ENCODE measurements at regions of chr16 and their contacts with region 1.

Region 1: DNA sequence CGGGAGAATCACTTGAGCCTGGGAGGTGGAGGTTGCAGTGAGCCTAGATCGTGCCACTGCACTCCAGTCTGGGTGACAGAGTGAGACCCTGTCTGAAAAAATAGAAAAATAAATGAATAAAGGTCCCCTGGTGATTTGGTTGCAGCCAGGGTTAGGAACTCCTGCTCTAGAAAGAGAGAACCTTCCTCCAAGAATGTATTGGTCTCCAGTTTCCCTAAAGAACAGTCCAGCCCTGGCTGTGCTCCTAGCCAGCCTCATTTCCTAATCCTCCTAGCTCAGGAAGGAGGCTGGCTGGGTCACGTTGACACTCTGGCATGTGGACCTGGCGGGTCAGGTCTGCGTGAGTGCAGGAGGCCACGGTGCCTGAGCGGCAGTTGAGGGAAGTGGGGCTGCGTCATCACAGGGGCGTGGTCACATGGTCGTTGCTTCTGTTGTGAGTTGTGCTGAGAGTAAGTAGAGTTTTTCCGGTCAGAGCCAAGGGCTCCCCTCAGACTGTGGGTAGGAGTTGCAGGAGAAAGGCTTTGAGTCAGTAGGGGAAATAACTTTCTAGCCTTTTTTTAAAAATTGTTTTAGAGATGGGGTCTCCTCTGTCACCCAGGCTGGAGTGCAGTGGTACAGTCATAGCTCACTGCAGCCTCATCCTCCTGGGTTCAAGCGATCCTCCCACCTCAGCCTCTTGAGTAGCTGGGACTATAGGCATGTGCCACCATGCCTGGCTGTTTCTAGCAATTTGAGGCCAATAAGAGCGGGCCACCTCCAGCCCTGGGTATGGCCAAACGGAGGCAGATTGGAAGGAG is 193.9 kb upstream of the CIBAR2 start:
- DNase-seq: peak; percentile 61 to 87 (median 85)
- ATAC-seq: peak; percentile 88
- H3K4me3 ChIP-seq: no peak overlapping the region
- H3K4me3 Mint-ChIP-seq: peak overlapping the region; percentile 45 to 86 (median 61)
- H3K27ac ChIP-seq: peak overlapping the region; percentile 57
- H3K27ac Mint-ChIP-seq: peak overlapping the region; percentile 86 to 98 (median 94)
- H3K4me1 ChIP-seq: peaks cover 0 to 70% of the 10 kb centered on the region in 2 donors
- H3K4me1 Mint-ChIP-seq: peaks cover 20 to 74% (median 56%) of the 10 kb centered on the region in 7 donors
- H3K27me3 ChIP-seq: no peaks in the 10 kb centered on the region
- H3K27me3 Mint-ChIP-seq: no peaks in the 10 kb centered on the region

Region 2: GRCh38 chr16:85017151-85017550 is 289.0 kb before region 1 on chr16:
- CTCF ChIA-PET with region 1: no interaction called
- POLR2A ChIA-PET with region 1: no interaction called
- intact Hi-C with region 1: no loop called
- DNase-seq: no peak
- ATAC-seq: peak; percentile 95
- H3K4me3 ChIP-seq: no peak overlapping the region
- H3K4me3 Mint-ChIP-seq: no peak overlapping the region
- H3K27ac ChIP-seq: no peak overlapping the region
- H3K27ac Mint-ChIP-seq: no peak overlapping the region
- H3K4me1 ChIP-seq: peaks cover 5 to 7% of the 10 kb centered on the region in 2 donors
- H3K4me1 Mint-ChIP-seq: peaks cover 4 to 20% (median 10%) of the 10 kb centered on the region in 7 donors
- H3K27me3 ChIP-seq: no peaks in the 10 kb centered on the region
- H3K27me3 Mint-ChIP-seq: peaks cover 0 to 20% (median 0%) of the 10 kb centered on the region in 5 donors

Region 3: DNA sequence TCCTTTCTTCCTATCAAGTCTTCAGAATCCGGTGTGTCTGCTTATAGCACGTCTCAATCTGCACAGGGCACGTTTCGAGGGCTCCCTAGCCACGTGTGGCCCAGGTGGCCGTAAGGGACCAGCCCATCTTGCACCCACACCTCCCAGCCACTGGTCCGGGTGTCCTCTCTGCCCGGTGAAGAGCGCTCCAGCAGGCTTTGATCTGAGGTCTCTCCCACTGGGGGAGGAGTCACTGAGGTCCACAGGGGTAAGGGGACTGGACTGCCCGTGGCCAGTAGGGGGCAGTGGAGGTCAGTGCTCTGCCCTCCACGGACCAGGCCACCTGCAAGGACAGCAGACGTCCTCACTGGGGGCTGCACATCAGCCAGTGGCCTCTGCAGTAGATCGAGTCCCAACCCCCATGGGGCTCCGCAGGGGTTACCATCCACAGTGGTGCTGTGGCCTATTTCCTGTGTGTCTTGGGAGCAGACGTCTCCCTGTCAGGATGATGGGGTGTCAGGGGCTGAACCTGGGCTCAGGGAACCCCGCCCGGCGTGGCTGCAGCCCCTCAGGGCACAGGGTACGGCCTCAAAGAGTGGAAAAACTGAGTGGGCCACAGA is 10.2 kb after region 1 on chr16:
- CTCF ChIA-PET with region 1: interaction called, 5 read pairs
- POLR2A ChIA-PET with region 1: interaction called, 3 read pairs
- intact Hi-C with region 1: loop called in 1 of 2 experiments (anchors 2 kb)
- DNase-seq: peak in 4 of 9 donors; percentile 29 to 57 (median 35)
- ATAC-seq: peak; percentile 80
- H3K4me3 ChIP-seq: no peak overlapping the region
- H3K4me3 Mint-ChIP-seq: no peak overlapping the region
- H3K27ac ChIP-seq: no peak overlapping the region
- H3K27ac Mint-ChIP-seq: no peak overlapping the region
- H3K4me1 ChIP-seq: peaks cover 0 to 5% of the 10 kb centered on the region in 2 donors
- H3K4me1 Mint-ChIP-seq: peaks cover 9 to 18% (median 11%) of the 10 kb centered on the region in 7 donors
- H3K27me3 ChIP-seq: no peaks in the 10 kb centered on the region
- H3K27me3 Mint-ChIP-seq: peaks cover 0 to 4% (median 0%) of the 10 kb centered on the region in 5 donors

Region 4: GRCh38 chr16:85369741-85370528 is 63.7 kb after region 1 on chr16:
- CTCF ChIA-PET with region 1: no interaction called
- POLR2A ChIA-PET with region 1: no interaction called
- intact Hi-C with region 1: loop called in 1 of 2 experiments (anchors 2 kb)
- DNase-seq: peak in 8 of 9 donors; percentile 15 to 54 (median 31)
- ATAC-seq: peak; percentile 49
- H3K4me3 ChIP-seq: no peak overlapping the region
- H3K4me3 Mint-ChIP-seq: no peak overlapping the region
- H3K27ac ChIP-seq: no peak overlapping the region
- H3K27ac Mint-ChIP-seq: no peak overlapping the region
- H3K4me1 ChIP-seq: no peaks in the 10 kb centered on the region
- H3K4me1 Mint-ChIP-seq: peaks cover 0 to 10% (median 2%) of the 10 kb centered on the region in 7 donors
- H3K27me3 ChIP-seq: no peaks in the 10 kb centered on the region
- H3K27me3 Mint-ChIP-seq: peaks cover 0 to 5% (median 0%) of the 10 kb centered on the region in 5 donors

Region 5: DNA sequence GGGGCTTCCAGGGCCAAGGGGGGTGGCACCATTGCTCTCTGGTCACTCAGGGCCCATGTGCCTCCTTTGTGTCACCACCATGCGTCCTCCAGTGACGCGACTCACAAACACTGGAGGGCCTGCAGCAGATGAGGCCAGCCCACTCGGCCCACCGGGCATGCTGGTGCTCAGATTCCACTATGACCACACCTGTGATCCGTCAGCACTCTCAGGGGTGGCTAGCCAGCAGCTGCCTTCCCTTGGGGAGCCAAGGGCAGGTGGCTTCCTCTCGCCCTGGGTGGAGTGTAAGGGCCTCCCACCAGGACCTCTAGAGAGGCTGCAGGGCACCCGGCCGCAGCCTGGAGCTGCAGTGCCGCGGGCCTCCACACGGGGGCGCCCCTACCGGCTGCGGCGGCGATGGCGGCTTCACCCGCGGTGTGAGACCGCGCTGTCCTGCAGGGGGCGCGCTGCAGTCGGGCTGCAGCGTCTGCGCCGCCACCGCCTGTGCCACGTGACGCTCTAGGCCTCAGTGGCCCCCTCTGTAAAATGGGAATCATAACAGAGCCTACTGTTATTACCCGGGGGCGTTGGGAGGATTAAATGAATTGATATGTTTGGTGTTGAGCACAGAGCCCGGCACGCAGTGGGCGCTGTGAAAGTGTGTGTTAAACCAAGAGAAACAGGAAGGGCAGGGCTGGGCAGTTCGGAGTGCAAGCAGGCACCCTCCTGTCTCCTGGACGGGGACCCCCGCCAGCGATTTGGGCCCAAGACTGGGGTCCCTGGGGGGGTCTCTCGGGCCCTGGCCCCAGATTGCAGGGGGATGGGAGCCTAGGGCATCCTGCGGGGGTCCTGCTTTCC is 114.5 kb after region 1 on chr16:
- CTCF ChIA-PET with region 1: no interaction called
- POLR2A ChIA-PET with region 1: no interaction called
- intact Hi-C with region 1: loop called (anchors 2 kb)
- DNase-seq: peak; percentile 29 to 90 (median 71)
- ATAC-seq: peak; percentile 95
- H3K4me3 ChIP-seq: no peak overlapping the region
- H3K4me3 Mint-ChIP-seq: no peak overlapping the region
- H3K27ac ChIP-seq: no peak overlapping the region
- H3K27ac Mint-ChIP-seq: no peak overlapping the region
- H3K4me1 ChIP-seq: peaks cover 0 to 10% of the 10 kb centered on the region in 2 donors
- H3K4me1 Mint-ChIP-seq: peaks cover 0 to 10% (median 0%) of the 10 kb centered on the region in 7 donors
- H3K27me3 ChIP-seq: no peaks in the 10 kb centered on the region
- H3K27me3 Mint-ChIP-seq: peaks cover 0 to 4% (median 0%) of the 10 kb centered on the region in 5 donors

Region 6: DNA sequence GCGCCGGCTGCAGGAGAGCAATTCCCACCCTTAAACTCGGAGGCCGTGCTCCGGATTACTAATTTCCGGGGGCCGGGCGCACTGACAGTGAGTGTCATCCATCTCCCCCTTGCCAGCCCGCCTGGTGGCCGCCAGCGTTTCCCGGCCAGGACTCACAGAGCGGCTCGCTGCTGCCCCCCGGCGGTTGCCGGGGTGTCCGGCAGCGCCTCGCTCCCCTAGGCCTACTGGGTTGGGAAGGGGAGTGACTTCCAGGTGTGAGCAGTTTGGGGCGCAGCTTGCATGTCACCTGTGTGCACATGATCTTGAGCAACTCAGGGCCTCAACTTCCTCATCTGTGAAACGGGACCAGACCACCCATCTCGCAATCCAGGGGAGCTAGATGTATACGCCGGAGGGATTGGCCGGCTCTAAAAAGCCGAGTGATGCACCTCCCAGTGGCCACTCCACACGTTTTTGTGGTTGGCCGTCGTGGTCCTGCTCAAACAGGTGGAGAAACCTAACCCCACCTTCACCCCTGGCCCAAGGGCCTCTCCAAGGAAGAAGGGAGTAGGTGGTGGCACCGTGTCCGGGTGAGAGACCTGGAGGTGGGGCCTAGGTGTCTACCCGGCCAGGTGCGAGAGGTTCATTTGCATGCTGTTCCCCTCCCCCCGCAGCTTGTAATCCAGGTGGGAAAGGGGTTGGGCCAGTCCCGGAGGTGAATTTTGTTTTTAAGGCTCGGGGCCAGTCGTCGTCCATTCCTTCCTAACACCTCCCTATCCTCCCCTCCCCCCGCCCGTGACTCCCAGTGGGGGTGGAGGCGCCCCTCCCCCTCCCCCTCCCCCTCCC is 304.5 kb after region 1 on chr16:
- CTCF ChIA-PET with region 1: interaction called, 7 read pairs
- POLR2A ChIA-PET with region 1: interaction called, 5 read pairs
- intact Hi-C with region 1: loop called (anchors 1 to 5 kb)
- DNase-seq: peak; percentile 68 to 93 (median 80)
- ATAC-seq: peak; percentile 85
- H3K4me3 ChIP-seq: peak overlapping the region; percentile 66
- H3K4me3 Mint-ChIP-seq: peak overlapping the region; percentile 73 to 86 (median 81)
- H3K27ac ChIP-seq: no peak overlapping the region
- H3K27ac Mint-ChIP-seq: peak overlapping the region in 5 of 9 donors; percentile 17 to 76 (median 76)
- H3K4me1 ChIP-seq: peaks cover 23 to 31% of the 10 kb centered on the region in 2 donors
- H3K4me1 Mint-ChIP-seq: peaks cover 16 to 55% (median 27%) of the 10 kb centered on the region in 7 donors
- H3K27me3 ChIP-seq: peaks cover 0 to 2% of the 10 kb centered on the region in 2 donors
- H3K27me3 Mint-ChIP-seq: peaks cover 0 to 14% (median 0%) of the 10 kb centered on the region in 5 donors

Region 7: GRCh38 chr16:85717393-85718121 is 411.4 kb after region 1 on chr16:
- CTCF ChIA-PET with region 1: no interaction called
- POLR2A ChIA-PET with region 1: no interaction called
- intact Hi-C with region 1: loop called in 1 of 2 experiments (anchors 10 kb)
- DNase-seq: peak; percentile 26 to 59 (median 49)
- ATAC-seq: peak; percentile 63
- H3K4me3 ChIP-seq: no peak overlapping the region
- H3K4me3 Mint-ChIP-seq: peak overlapping the region in 1 of 10 donors; percentile 61
- H3K27ac ChIP-seq: no peak overlapping the region
- H3K27ac Mint-ChIP-seq: no peak overlapping the region
- H3K4me1 ChIP-seq: peaks cover 0 to 11% of the 10 kb centered on the region in 2 donors
- H3K4me1 Mint-ChIP-seq: peaks cover 0 to 20% (median 17%) of the 10 kb centered on the region in 7 donors
- H3K27me3 ChIP-seq: no peaks in the 10 kb centered on the region
- H3K27me3 Mint-ChIP-seq: peaks cover 0 to 15% (median 0%) of the 10 kb centered on the region in 5 donors